ENCODE measurements at regions of chrX and their contacts with region 1.

Region 1: DNA sequence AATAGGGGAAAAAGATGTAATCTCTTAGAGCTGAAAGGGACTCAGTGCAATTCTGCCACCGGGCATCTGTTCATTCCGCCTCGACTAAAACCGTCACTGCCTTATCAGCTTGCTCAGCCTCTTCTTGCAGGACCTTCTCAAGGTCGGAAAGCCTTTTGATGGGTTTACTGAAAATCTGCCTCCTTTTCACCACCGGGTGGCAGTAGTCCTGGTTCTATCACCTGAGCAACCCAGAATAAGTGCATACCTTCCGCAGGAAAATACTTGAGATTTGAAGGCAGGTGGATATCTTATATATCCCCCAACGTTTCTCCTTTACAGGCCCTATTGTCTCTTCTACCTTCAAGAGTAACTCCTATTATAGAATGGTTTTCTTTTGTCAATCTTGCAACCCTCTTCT is 103.4 kb upstream of the PAK3 start:
- DNase-seq: no peak
- ATAC-seq: no peak; the same call in 1 of the 2 replicates
- H3K4me3 ChIP-seq: no peak overlapping the region
- H3K27ac ChIP-seq: no peak overlapping the region
- H3K4me1 ChIP-seq: no peaks in the 10 kb centered on the region
- H3K27me3 ChIP-seq: no peaks in the 10 kb centered on the region
- CTCF ChIP-seq: peak in 2 of 3 experiments; percentile 44 to 47; a peak in 4 of 6 replicates
- POLR2A ChIP-seq: no peak
- RAD21 ChIP-seq: peak; percentile 13; the same call in 1 of the 2 replicates

Region 2: DNA sequence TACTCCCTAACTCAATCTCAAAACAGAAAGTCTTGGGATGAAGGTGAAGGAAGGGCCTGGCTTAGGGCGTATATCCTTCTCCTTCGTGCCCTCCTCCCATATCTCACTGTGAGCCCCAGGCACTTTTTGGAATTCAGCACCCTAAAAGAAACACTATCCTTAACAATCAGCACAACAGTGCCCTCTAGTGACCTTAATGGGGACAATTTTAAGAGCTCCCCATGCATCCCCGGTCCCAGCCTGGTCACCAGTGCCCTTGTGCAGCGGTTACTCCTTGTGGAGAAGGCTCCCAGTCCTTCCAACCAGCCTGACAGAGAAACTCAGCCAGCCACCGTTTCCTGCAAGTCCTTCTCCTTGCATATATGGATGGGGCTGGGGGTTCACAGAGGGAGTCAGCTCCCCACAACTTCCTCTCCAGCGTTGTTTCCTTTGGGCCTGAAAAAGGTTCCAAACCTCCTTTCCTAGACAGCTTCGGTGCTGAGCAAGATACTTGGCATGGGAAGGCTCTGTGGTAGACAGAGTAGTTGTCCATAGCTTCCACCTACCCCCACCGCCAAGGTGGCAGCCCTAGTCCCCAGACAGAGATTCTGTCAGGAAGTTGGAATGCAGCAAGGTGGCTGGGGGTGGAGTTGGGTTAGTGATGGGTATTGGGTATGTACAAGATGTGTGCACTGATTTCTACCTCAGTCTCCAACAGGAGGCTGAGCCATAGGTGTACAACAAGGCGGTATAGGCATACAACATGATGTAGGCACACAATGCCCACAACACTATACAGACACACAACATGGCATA is 107.8 kb after region 1 on chrX:
- CTCF ChIA-PET with region 1: interaction called, 4 read pairs
- POLR2A ChIA-PET with region 1: no interaction called
- RAD21 ChIA-PET with region 1: no interaction called
- intact Hi-C with region 1: loop called (anchors 5 kb)
- DNase-seq: peak; percentile 10
- ATAC-seq: peak; percentile 79
- H3K4me3 ChIP-seq: no peak overlapping the region
- H3K27ac ChIP-seq: no peak overlapping the region
- H3K4me1 ChIP-seq: no peaks in the 10 kb centered on the region
- H3K27me3 ChIP-seq: no peaks in the 10 kb centered on the region
- CTCF ChIP-seq: peak; percentile 24 to 47 (median 25); a peak in 4 of 6 replicates
- POLR2A ChIP-seq: no peak
- RAD21 ChIP-seq: peak; percentile 18; the same call in 1 of the 2 replicates

Region 3: DNA sequence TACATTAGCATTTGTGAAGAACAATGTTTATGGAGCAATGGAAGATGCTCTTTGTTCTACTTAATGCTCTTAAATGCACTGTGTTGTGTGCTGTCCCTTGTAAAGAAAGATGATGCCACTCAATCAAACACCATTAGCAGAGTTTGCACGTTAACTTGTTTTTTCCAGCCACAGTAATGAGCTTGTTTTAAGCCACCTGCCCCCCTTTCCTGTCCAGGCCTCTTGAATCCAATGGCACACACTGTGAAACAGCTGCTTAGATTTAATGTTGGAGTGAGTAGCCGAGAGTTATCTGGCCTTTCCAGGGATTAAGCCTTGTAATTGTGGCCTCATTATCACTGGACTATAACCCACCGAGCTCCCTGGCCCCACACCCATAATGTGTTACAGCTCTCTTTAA is 189.3 kb after region 1 on chrX:
- CTCF ChIA-PET with region 1: no interaction called
- POLR2A ChIA-PET with region 1: no interaction called
- RAD21 ChIA-PET with region 1: no interaction called
- intact Hi-C with region 1: no loop called
- DNase-seq: no peak
- ATAC-seq: no peak
- H3K4me3 ChIP-seq: no peak overlapping the region
- H3K27ac ChIP-seq: no peak overlapping the region
- H3K4me1 ChIP-seq: no peaks in the 10 kb centered on the region
- H3K27me3 ChIP-seq: no peaks in the 10 kb centered on the region
- CTCF ChIP-seq: no peak
- POLR2A ChIP-seq: no peak
- RAD21 ChIP-seq: no peak